OCI-LY7 (cell line): ENCODE measurements at regions of chr11 and their contacts with region 1.

Region 1: DNA sequence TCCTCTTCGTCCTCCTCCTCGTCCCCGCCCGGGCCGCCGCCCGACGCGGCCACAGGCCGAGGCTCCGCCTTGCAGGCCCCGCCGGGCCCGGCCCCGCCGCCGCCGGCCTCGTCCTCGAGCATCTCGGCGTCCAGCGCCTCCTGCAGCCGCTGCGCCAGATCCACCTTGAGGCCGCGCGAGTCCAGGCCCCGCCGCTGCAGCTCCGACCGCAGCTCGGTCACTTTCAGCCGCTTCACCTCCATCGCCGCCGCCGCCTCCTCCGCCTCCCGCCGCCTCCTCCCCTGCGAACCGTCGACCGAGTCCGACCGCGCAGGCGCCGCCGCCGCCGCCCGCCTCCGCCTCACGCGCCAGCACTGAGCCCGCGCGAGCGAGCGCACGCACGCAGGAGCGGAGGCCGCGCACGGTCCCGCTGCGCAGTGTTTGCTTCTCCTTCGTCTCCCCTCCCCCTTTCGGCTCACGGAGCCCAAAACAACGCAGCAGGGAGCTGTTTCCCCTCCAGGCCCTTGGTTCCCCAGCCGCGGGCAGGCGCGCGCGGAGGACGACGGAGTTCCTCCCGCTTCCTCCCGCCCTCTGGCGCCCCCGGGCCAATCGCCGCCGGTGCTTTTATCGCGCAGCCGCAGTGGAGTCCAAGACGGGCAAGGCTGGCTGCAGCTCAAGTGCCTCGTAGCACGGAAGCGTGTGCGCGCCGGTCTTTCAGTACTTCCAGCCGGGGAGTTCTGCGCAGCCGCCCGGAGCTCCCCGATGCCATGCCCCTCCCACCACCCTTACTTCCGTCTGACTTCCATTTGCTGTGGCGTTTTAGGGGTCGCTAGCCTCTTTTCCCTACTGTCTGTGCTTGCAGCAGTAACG is at the start of gene HNRNPUL2:
- DNase-seq: peak; percentile 100
- H3K4me3 ChIP-seq: peak within 1 kb of the TSS; percentile 97
- H3K27ac ChIP-seq: peak within 1 kb of the TSS; percentile 93
- H3K4me1 ChIP-seq: peaks cover 28% of the 10 kb centered on the region
- CTCF ChIP-seq: no peak
- total RNA-seq, gene HNRNPUL2: 8.3 and 19.2 TPM in 2 replicates

Region 2: DNA sequence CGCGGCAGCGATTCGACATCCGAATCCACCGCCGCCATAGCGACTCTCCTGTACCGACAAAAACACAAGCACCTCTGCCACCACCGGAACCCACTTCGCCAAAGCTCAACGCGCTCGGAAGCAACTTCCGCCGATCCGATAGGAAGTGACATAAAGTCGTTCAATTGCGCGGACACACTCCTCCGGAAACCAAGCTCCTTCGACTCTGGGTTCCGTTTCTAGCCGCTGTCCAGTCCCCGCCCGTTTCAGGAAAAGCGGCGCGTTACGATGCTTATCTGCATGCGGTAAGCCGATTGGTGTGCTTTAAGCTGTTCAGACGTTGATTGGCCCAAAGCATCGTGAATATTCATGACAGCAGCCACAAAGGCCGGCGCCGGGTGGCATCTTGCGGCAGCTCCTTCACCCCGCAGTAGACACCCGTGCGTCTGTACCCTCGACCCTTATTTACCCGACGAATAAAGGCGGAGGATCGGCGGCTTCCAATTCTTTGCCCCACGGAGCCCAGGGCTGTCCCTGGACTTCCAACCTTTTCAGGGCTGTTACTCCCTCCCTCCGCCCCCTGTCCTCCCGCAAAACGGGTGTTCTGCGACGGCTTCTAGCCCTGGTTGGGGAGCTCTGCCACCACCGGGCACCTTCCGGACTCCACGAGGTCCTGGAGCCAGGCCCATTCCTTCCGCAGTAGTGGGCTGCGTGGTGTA is 135.5 kb before region 1 on chr11 and contains the start of gene TUT1:
- CTCF ChIA-PET with region 1: no interaction called
- POLR2A ChIA-PET with region 1: interaction called, 5 read pairs
- intact Hi-C with region 1: loop called (anchors 10 kb)
- DNase-seq: peak; percentile 100
- H3K4me3 ChIP-seq: peak within 1 kb of the TSS; percentile 85
- H3K27ac ChIP-seq: peak within 1 kb of the TSS; percentile 79
- H3K4me1 ChIP-seq: peaks cover 33% of the 10 kb centered on the region
- CTCF ChIP-seq: 0 out of 2 replicates have a peak, but pooled peaks have one; percentile 7
- total RNA-seq, gene TUT1: 15.6 and 22.5 TPM in 2 replicates

Region 3: DNA sequence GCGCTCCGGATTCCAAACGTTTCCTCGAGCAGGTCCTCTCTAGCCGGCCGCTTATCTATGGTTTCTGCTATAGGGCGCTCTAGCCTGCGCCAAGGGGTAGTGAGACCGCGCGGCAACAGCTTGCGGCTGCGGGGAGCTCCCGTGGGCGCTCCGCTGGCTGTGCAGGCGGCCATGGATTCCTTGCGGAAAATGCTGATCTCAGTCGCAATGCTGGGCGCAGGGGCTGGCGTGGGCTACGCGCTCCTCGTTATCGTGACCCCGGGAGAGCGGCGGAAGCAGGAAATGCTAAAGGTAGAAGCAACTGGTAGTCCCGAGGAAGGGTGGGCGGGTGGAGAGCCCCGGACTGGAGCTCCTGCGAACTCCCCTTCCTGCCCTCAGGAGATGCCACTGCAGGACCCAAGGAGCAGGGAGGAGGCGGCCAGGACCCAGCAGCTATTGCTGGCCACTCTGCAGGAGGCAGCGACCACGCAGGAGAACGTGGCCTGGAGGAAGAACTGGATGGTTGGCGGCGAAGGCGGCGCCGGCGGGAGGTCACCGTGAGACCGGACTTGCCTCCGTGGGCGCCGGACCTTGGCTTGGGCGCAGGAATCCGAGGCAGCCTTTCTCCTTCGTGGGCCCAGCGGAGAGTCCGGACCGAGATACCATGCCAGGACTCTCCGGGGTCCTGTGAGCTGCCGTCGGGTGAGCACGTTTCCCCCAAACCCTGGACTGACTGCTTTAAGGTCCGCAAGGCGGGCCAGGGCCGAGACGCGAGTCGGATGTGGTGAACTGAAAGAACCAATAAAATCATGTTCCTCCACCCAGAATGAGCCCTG is 55.4 kb before region 1 on chr11 and contains the starts of genes LBHD1 and UQCC3:
- CTCF ChIA-PET with region 1: no interaction called
- POLR2A ChIA-PET with region 1: interaction called, 4 read pairs
- intact Hi-C with region 1: loop called (anchors 5 kb)
- DNase-seq: peak; percentile 86
- H3K4me3 ChIP-seq: peak within 1 kb of the TSS; percentile 81
- H3K27ac ChIP-seq: peak within 1 kb of the TSS; percentile 73
- H3K4me1 ChIP-seq: peaks cover 56% of the 10 kb centered on the region
- CTCF ChIP-seq: no peak
- total RNA-seq, gene LBHD1: 7.1 and 9.3 TPM in 2 replicates
- total RNA-seq, gene UQCC3: 40.0 and 40.3 TPM in 2 replicates

Region 4: GRCh38 chr11:62705880-62706849 is 21.0 kb before region 1 on chr11:
- CTCF ChIA-PET with region 1: no interaction called
- POLR2A ChIA-PET with region 1: interaction called, 5 read pairs
- intact Hi-C with region 1: loop called (anchors 2 kb)
- DNase-seq: peak; percentile 94
- H3K4me3 ChIP-seq: peak overlapping the region; percentile 73
- H3K27ac ChIP-seq: peak overlapping the region; percentile 19
- H3K4me1 ChIP-seq: peaks cover 44% of the 10 kb centered on the region
- CTCF ChIP-seq: no peak

Region 5: DNA sequence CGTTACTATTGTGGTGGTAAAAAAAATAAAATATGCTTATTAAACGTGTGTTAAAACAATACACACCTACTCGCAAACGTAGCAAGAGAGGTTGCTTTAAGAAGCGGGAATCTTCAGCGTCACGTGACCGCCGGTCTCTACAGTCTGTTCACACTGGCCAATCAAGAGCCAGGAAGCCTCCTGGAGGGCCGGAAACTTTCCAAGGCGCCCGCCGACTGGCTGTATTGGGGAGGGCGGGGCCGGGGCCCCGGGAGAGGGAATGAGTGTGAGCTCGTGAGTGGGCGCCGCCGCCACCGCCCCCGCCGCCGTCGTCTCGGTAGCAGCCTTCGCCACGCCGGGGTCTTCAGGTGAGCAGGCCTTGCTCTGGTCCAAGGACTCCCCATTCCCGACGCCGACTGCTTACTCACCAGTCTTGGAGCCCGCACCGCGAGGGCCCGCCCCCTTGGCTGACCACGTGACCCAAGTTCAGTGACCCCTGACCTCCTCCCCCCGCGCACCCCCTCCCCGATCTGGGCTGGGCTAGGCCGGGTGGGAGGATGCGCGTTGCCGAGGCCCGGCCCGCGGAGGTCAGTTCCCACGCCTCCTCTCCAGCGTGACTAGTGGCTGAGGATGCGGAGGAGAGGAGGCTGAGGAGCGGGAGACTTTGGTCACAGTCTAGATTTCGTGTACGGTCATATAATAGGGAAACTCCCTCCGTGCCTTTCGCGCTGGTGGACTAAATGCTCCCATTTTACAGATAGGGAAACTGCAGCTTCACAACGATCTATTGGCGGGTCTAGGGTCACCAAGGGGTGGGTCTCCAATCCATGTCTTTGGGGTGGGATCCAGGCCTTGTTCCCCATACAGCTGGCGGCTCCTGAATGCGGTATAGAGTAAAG is 44.2 kb after region 1 on chr11 and contains the start of gene TAF6L:
- CTCF ChIA-PET with region 1: no interaction called
- POLR2A ChIA-PET with region 1: interaction called, 14 read pairs
- intact Hi-C with region 1: loop called (anchors 1 kb)
- DNase-seq: peak; percentile 94
- H3K4me3 ChIP-seq: peak within 1 kb of the TSS; percentile 77
- H3K27ac ChIP-seq: peak within 1 kb of the TSS; percentile 71
- H3K4me1 ChIP-seq: peaks cover 32% of the 10 kb centered on the region
- CTCF ChIP-seq: no peak
- total RNA-seq, gene TAF6L: 23.7 and 26.1 TPM in 2 replicates

Region 6: GRCh38 chr11:62841361-62842184 is 114.4 kb after region 1 on chr11:
- CTCF ChIA-PET with region 1: no interaction called
- POLR2A ChIA-PET with region 1: interaction called, 7 read pairs
- intact Hi-C with region 1: loop called (anchors 5 kb)
- DNase-seq: peak; percentile 97
- H3K4me3 ChIP-seq: peak overlapping the region; percentile 94
- H3K27ac ChIP-seq: peak overlapping the region; percentile 90
- H3K4me1 ChIP-seq: peaks cover 29% of the 10 kb centered on the region
- CTCF ChIP-seq: no peak

Region 7: DNA sequence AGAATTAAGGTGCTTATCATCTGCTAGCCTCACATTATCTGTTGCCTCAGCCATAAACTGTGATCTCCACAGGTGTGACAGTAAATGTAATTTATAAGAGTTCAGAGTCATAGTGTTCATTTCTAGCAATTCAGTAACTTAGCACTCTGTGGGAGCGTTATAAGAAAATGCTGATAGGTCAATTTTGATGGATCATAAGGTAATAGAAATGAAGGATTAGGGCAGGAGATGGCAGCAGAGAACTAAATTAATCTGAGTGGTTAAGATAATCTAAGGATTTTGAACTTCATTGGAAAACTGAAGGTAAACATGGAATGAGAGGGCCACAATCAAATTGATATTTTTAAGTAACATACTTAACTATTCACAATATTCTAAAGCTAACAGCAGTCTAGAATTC is 616.0 kb after region 1 on chr11:
- CTCF ChIA-PET with region 1: no interaction called
- POLR2A ChIA-PET with region 1: no interaction called
- intact Hi-C with region 1: no loop called
- DNase-seq: no peak
- H3K4me3 ChIP-seq: no peak overlapping the region
- H3K27ac ChIP-seq: no peak overlapping the region
- H3K4me1 ChIP-seq: no peaks in the 10 kb centered on the region
- CTCF ChIP-seq: no peak